ENCODE measurements at regions of chrX and their contacts with region 1.

Region 1: GRCh38 chrX:48475774-48476577 is at the start of gene FTSJ1:
- DNase-seq: peak; percentile 77 to 97 (median 84)
- ATAC-seq: peak; percentile 90
- H3K4me3 ChIP-seq: peak within 1 kb of the TSS; percentile 92
- H3K4me3 Mint-ChIP-seq: peak within 1 kb of the TSS; percentile 90
- H3K27ac ChIP-seq: peak within 1 kb of the TSS; percentile 73 to 79
- H3K27ac Mint-ChIP-seq: peak within 1 kb of the TSS; percentile 74
- H3K4me1 ChIP-seq: peaks cover 22% of the 10 kb centered on the region
- H3K4me1 Mint-ChIP-seq: peaks cover 27% of the 10 kb centered on the region
- H3K27me3 ChIP-seq: no peaks in the 10 kb centered on the region
- H3K27me3 Mint-ChIP-seq: no peaks in the 10 kb centered on the region
- CTCF ChIP-seq: no peak
- total RNA-seq, gene FTSJ1: 60.0 to 61.0 TPM

Region 2: DNA sequence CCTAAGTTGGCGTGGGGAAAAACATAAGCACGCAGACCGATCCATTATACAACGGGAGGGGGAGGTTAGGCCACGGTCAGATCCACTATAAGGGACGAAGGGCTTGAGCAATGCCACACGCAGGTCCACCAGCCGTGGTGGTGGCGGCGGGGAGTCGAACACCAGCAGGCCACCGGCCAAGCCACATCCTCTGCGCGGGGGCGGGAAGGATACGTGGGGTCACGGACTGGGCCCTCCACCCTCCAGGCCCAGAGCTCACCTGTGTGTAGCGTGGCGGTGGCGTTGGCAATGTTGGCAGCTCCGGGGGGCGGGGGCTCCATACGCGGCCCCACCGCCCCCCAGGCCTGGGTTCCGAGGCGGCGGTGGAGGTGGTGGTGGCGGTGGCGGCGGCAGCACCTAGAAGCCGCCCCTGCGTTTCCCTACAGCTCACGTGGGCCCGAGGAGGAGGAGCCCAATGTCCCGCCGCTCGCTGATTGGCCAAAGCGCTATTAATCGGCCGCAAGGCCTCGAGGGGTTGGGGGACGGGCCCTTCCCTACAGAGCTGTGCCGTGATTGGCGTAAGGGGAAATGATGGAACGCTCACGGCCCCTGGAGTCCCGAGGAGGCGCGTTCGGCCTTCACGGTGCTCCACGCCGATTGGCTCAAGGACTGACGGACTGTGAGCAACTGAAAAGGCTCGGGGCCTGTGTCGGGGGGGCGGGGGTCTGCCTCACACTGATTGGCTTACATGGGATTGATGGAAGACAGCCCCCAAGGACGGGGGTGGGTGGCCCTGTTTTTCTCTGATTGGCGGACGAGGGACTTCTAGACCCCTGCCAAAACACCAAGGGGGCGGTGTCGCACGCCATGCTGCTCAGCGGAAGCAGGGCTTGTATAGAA is 825.6 kb before region 1 on chrX and contains the start of gene ELK1:
- CTCF ChIA-PET with region 1: no interaction called
- POLR2A ChIA-PET with region 1: no interaction called
- intact Hi-C with region 1: loop called in 1 of 2 experiments (anchors 10 kb)
- DNase-seq: peak; percentile 75 to 96 (median 84)
- ATAC-seq: peak; percentile 88
- H3K4me3 ChIP-seq: peak within 1 kb of the TSS; percentile 83
- H3K4me3 Mint-ChIP-seq: peak within 1 kb of the TSS; percentile 94
- H3K27ac ChIP-seq: peak within 1 kb of the TSS; percentile 65 to 76
- H3K27ac Mint-ChIP-seq: peak within 1 kb of the TSS; percentile 89
- H3K4me1 ChIP-seq: peaks cover 29% of the 10 kb centered on the region
- H3K4me1 Mint-ChIP-seq: peaks cover 39% of the 10 kb centered on the region
- H3K27me3 ChIP-seq: no peaks in the 10 kb centered on the region
- H3K27me3 Mint-ChIP-seq: no peaks in the 10 kb centered on the region
- CTCF ChIP-seq: no peak
- total RNA-seq, gene ELK1: 38.9 to 40.5 TPM

Region 3: DNA sequence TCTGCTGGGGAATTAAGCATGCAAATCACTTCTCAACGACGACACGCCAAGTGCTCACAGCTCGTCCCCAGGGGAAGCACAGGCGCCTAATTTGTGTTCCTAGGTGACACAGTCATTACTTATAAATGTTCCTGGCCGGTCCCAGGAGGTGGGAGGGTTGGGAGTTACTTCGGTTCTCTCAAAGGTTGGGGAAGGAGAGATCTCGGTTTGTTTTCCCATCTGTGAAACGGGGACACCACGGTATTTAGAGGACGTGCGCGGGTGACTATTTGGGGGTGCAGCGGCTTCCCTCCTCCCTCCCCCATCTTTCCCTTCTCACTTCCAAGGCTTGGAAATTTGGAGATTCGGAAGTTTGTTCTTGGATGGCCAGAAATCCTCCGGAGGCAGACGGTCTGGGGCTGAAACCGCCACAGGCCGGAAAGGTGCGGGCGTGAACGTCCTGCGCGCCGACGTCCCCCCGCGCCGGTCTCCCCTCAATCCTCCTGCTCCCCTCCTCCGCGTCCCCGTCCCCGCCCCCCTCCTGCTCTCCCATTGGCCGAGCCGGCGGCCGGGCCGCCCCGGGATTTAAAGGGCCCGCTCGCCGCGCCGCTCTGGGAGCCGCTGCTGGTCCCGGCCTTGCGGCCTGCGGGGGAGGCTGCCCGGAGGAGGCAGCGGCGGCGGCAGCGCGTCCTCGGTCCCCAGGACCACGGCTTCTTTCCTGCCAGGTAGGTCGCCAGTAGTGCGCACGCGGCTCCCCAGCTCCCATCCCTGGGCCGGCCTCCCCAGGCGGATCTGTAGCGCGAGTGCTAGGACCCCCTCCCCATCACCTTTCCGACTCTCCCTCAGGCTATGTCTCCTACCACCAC is 32.6 kb after region 1 on chrX and contains the start of gene PORCN:
- CTCF ChIA-PET with region 1: no interaction called
- POLR2A ChIA-PET with region 1: interaction called, 3 read pairs
- intact Hi-C with region 1: loop called in 1 of 2 experiments (anchors 2 kb)
- DNase-seq: peak; percentile 55 to 84 (median 76)
- ATAC-seq: peak; percentile 94
- H3K4me3 ChIP-seq: peak within 1 kb of the TSS; percentile 79
- H3K4me3 Mint-ChIP-seq: peak within 1 kb of the TSS; percentile 94
- H3K27ac ChIP-seq: peak within 1 kb of the TSS; percentile 41 to 55
- H3K27ac Mint-ChIP-seq: peak within 1 kb of the TSS; percentile 84
- H3K4me1 ChIP-seq: peaks cover 19% of the 10 kb centered on the region
- H3K4me1 Mint-ChIP-seq: peaks cover 26% of the 10 kb centered on the region
- H3K27me3 ChIP-seq: no peaks in the 10 kb centered on the region
- H3K27me3 Mint-ChIP-seq: no peaks in the 10 kb centered on the region
- CTCF ChIP-seq: no peak
- total RNA-seq, gene PORCN: 12.0 to 14.1 TPM

Region 4: GRCh38 chrX:48521353-48522243 is 45.6 kb after region 1 on chrX and contains the start of gene EBP:
- CTCF ChIA-PET with region 1: no interaction called
- POLR2A ChIA-PET with region 1: no interaction called
- intact Hi-C with region 1: loop called (anchors 5 kb)
- DNase-seq: peak; percentile 87 to 97 (median 92)
- ATAC-seq: peak; percentile 96
- H3K4me3 ChIP-seq: peak within 1 kb of the TSS; percentile 76
- H3K4me3 Mint-ChIP-seq: peak within 1 kb of the TSS; percentile 92
- H3K27ac ChIP-seq: peak within 1 kb of the TSS; percentile 65
- H3K27ac Mint-ChIP-seq: peak within 1 kb of the TSS; percentile 89
- H3K4me1 ChIP-seq: peaks cover 41% of the 10 kb centered on the region
- H3K4me1 Mint-ChIP-seq: peaks cover 35% of the 10 kb centered on the region
- H3K27me3 ChIP-seq: no peaks in the 10 kb centered on the region
- H3K27me3 Mint-ChIP-seq: no peaks in the 10 kb centered on the region
- CTCF ChIP-seq: no peak
- total RNA-seq, gene EBP: 38.1 to 41.1 TPM

Region 5: GRCh38 chrX:48597353-48598264 is 121.6 kb after region 1 on chrX and contains the start of gene WDR13:
- CTCF ChIA-PET with region 1: no interaction called
- POLR2A ChIA-PET with region 1: no interaction called
- intact Hi-C with region 1: loop called in 1 of 2 experiments (anchors 5 kb)
- DNase-seq: peak; percentile 81 to 95 (median 90)
- ATAC-seq: peak; percentile 81
- H3K4me3 ChIP-seq: peak within 1 kb of the TSS; percentile 90
- H3K4me3 Mint-ChIP-seq: peak within 1 kb of the TSS; percentile 98
- H3K27ac ChIP-seq: peak within 1 kb of the TSS; percentile 96 to 99
- H3K27ac Mint-ChIP-seq: peak within 1 kb of the TSS; percentile 100
- H3K4me1 ChIP-seq: peaks cover 19% of the 10 kb centered on the region
- H3K4me1 Mint-ChIP-seq: peaks cover 15% of the 10 kb centered on the region
- H3K27me3 ChIP-seq: no peaks in the 10 kb centered on the region
- H3K27me3 Mint-ChIP-seq: no peaks in the 10 kb centered on the region
- CTCF ChIP-seq: no peak
- total RNA-seq, gene WDR13: 37.9 to 43.4 TPM

Region 6: GRCh38 chrX:48897621-48898306 is 421.8 kb after region 1 on chrX and contains the starts of genes PQBP1 and TIMM17B:
- CTCF ChIA-PET with region 1: no interaction called
- POLR2A ChIA-PET with region 1: no interaction called
- intact Hi-C with region 1: no loop called
- DNase-seq: peak; percentile 73 to 96 (median 84)
- ATAC-seq: peak; percentile 84
- H3K4me3 ChIP-seq: peak within 1 kb of the TSS; percentile 91
- H3K4me3 Mint-ChIP-seq: peak within 1 kb of the TSS; percentile 91
- H3K27ac ChIP-seq: peak within 1 kb of the TSS; percentile 93 to 98
- H3K27ac Mint-ChIP-seq: peak within 1 kb of the TSS; percentile 90
- H3K4me1 ChIP-seq: peaks cover 33% of the 10 kb centered on the region
- H3K4me1 Mint-ChIP-seq: peaks cover 27% of the 10 kb centered on the region
- H3K27me3 ChIP-seq: no peaks in the 10 kb centered on the region
- H3K27me3 Mint-ChIP-seq: no peaks in the 10 kb centered on the region
- CTCF ChIP-seq: no peak
- total RNA-seq, gene PQBP1: 73.0 to 76.6 TPM
- total RNA-seq, gene TIMM17B: 40.0 to 40.3 TPM